ENCODE measurements at regions of chr2 and their contacts with region 1.

Region 1: GRCh38 chr2:101546376-101547058 is 71.6 kb upstream of the RFX8 start:
- DNase-seq: no peak

Region 2: GRCh38 chr2:101587251-101587650 is 40.7 kb after region 1 on chr2:
- intact Hi-C with region 1: no loop called
- DNase-seq: no peak

Region 3: DNA sequence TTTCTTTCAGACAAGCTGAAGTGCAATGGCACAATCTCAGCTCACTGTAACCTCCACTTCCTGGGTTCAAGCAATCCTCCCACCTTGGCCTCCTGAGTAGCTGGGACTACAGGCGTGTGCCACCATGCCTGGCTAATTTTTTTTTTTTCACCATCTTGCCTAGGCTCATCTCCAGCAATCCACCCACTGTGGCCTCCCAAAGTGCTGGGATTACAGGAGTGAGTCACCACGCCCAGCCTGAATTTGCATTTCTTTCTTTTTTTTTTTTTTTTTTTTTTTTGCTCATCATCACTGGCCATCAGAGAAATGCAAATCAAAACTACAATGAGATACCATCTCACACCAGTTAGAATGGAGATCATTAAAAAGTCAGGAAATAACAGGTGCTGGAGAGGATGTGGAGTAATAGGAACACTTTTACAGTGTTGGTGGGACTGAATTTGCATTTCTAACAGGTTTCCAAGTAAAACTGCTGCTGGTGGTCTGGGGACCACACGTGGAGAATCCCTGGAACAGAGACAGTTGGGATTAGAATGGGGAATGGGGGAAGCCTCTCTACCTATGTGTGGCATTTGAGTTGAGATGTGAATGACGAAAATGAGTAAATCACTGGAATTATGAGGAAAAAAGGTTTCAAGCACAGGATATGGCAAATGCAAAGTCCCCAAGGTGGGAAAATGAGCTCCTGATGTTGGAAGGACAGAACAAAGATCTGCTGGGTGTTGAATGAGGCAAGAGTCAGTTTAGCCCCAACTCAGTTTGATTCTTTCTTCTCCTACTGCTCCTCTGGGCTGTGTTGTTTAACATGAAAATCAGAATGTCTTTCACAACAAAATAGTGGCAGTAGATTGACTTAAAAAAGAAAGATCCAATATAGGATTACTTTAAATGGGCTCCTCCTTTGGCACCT is 62.1 kb after region 1 on chr2:
- intact Hi-C with region 1: loop called (anchors 10 kb)
- DNase-seq: no peak